ENCODE measurements at regions of chr14 and their contacts with region 1.

Region 1: DNA sequence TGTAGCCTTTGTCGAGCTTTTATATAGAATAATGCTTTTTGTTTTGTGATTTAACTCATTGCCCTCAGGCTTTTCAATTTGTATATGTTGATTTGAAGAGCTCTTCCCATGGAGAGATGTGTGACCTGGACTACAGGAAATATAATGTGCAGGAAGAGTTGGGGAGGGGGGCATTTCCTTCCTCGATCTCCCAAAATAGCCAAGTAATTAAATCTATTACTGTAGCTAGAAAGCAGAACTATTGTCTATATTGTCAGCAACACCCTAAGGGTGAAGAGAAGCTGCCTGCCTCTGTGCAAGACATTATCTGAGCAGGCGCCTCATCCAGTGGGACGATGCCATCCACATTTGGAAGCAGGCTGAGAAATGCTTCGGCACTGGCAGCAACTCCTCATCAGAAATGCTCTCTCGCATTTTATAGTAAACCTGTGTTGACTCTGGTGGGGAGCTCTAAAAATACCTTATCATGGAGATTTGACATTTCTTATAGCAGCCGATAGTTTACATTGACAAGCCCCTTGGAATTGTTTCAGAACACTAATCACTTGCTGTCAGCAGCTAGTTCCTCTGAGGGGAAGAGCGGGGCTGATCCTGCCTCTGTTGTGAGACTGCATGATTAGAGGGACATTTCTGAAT is 392.5 kb upstream of the RGS6 start:
- DNase-seq: no peak
- ATAC-seq: no peak
- H3K4me3 Mint-ChIP-seq: peak overlapping the region; percentile 53
- H3K27ac Mint-ChIP-seq: peak overlapping the region; percentile 38
- H3K4me1 Mint-ChIP-seq: peaks cover 58% of the 10 kb centered on the region
- H3K27me3 Mint-ChIP-seq: no peaks in the 10 kb centered on the region
- CTCF ChIP-seq: no peak

Region 2: DNA sequence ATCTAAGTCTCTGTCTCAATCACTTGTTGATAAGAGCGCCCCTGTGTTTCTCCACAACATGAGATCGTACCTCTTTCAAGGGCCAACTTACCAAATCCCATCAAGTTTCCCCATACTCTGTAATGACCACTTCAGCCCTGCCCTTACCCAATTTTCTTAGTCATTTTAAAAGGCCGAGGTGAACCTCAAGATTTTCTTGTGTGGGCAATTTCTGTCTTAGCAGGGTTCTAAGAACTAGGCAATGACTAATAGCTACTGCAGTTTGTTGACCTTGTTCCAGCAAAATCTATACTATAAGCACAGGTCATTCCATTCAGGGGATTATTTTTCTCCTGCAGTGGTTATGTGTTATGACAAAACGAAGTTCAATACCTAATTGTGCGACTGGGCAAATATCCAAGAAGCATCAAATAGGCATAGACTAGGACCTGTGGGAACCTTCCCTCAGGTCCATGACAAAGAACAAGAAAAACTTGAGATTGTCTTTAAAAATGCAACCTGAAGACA is 272.7 kb before region 1 on chr14:
- CTCF ChIA-PET with region 1: no interaction called
- POLR2A ChIA-PET with region 1: no interaction called
- intact Hi-C with region 1: no loop called
- DNase-seq: no peak
- ATAC-seq: no peak
- H3K4me3 Mint-ChIP-seq: peak overlapping the region; percentile 60
- H3K27ac Mint-ChIP-seq: no peak overlapping the region
- H3K4me1 Mint-ChIP-seq: peaks cover 16% of the 10 kb centered on the region
- H3K27me3 Mint-ChIP-seq: peaks cover 2% of the 10 kb centered on the region
- CTCF ChIP-seq: no peak

Region 3: DNA sequence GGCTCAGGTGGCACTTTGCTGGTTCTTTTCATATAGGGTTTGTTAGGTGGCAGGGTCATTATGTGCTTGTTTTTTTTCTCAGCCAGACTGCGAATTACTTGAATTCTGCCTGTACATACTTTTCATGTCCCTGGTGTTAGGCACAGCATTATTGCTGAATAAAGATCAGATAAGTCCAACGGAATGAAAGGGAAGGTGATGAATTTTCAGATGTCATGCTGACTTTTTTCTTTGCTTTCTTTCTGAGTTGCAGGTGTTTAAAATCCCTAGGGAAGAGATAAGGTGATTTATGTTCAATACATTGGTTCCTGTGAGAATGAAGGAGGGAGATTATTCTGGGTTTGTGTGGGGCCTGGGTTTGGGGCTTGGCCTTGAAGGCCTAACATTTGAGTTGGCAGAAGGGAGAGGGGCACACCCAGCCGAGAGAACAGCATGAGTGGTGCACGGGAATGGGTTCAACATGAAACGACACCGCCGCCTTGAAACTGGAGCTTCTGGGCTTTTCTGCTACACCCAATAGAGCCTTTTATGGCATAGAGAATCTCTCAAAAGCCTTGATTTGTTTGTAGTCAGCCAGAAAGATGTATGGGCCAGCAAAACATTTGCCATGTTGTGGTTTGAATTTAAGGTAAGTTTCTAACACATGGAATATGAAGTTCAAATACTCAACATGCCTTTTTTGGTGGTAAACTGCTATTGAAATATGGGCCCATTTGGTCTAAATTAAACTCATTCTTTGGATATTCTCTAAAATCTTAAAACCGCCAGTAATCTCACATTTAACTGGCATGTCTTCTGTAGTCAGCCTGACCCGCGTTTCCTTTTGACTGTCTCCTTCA is 155.5 kb before region 1 on chr14:
- CTCF ChIA-PET with region 1: no interaction called
- POLR2A ChIA-PET with region 1: no interaction called
- intact Hi-C with region 1: no loop called
- DNase-seq: no peak
- ATAC-seq: no peak
- H3K4me3 Mint-ChIP-seq: no peak overlapping the region
- H3K27ac Mint-ChIP-seq: peak overlapping the region; percentile 47
- H3K4me1 Mint-ChIP-seq: peaks cover 79% of the 10 kb centered on the region
- H3K27me3 Mint-ChIP-seq: no peaks in the 10 kb centered on the region
- CTCF ChIP-seq: no peak

Region 4: GRCh38 chr14:71497645-71498086 is 42.1 kb before region 1 on chr14:
- CTCF ChIA-PET with region 1: no interaction called
- POLR2A ChIA-PET with region 1: no interaction called
- intact Hi-C with region 1: loop called (anchors 5 kb)
- DNase-seq: no peak
- ATAC-seq: peak; percentile 87
- H3K4me3 Mint-ChIP-seq: peak overlapping the region; percentile 8
- H3K27ac Mint-ChIP-seq: peak overlapping the region; percentile 57
- H3K4me1 Mint-ChIP-seq: peaks cover 36% of the 10 kb centered on the region
- H3K27me3 Mint-ChIP-seq: no peaks in the 10 kb centered on the region
- CTCF ChIP-seq: no peak

Region 5: GRCh38 chr14:71566276-71566675 is 26.5 kb after region 1 on chr14:
- CTCF ChIA-PET with region 1: no interaction called
- POLR2A ChIA-PET with region 1: no interaction called
- intact Hi-C with region 1: no loop called
- DNase-seq: no peak
- ATAC-seq: peak; percentile 81
- H3K4me3 Mint-ChIP-seq: peak overlapping the region; percentile 59
- H3K27ac Mint-ChIP-seq: peak overlapping the region; percentile 51
- H3K4me1 Mint-ChIP-seq: peaks cover 30% of the 10 kb centered on the region
- H3K27me3 Mint-ChIP-seq: no peaks in the 10 kb centered on the region
- CTCF ChIP-seq: no peak

Region 6: DNA sequence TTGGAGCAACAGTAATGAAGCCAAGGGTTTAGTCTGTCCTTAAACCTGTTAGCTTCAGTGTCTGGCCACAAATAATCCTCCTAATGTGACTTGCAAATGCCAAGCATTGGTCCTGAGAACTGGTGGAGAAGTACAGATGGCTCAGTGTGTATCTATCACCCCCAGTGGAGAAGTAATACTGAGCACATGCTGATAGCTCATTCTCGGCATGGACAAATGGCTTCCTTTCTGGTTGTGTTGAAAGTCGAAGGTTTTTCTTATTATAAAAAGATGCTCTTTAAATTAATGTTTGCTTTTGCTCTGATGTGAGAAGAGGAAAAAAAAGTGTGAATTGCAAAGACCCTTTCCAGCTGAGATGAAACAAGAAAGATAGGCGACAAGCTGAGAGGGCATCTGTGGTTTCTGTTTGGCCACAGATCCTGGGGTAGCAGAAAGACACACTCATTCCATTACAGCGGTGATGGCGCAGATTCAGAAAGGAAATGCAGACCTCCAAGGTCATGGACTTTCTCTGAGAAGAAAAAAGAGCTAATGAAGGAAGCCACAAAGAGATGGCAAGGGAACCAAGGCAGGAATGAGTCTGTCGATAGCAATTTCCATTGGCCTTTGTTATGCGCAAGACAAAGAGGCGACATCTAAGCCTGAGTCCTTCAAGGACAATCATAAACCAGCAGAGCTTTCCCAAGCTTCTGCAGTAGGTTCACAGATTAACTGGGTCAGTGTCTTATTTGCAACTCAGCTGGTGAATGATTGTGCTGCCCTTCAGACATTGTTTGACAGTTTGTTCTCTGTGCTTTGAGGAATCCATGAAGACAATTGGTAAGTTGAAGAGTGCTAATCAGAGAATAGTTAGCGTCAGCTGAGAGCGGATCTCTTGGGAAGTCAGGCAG is 236.9 kb after region 1 on chr14:
- CTCF ChIA-PET with region 1: no interaction called
- POLR2A ChIA-PET with region 1: no interaction called
- intact Hi-C with region 1: no loop called
- DNase-seq: no peak
- ATAC-seq: no peak
- H3K4me3 Mint-ChIP-seq: no peak overlapping the region
- H3K27ac Mint-ChIP-seq: no peak overlapping the region
- H3K4me1 Mint-ChIP-seq: no peaks in the 10 kb centered on the region
- H3K27me3 Mint-ChIP-seq: peaks cover 19% of the 10 kb centered on the region
- CTCF ChIP-seq: no peak

Measured in activated B cell treated with CpG ODN at 0.5 μM for 24 hours (primary cell).